AG04450 (cell line): ENCODE measurements at regions of chr3 and their contacts with region 1.

Region 1: GRCh38 chr3:159988617-159989271 is at the start of gene IL12A:
- DNase-seq: no peak
- H3K4me3 ChIP-seq: peak within 1 kb of the TSS; percentile 70
- H3K27ac ChIP-seq: no peak within 1 kb of the TSS
- H3K27me3 ChIP-seq: no peaks in the 10 kb centered on the region
- CTCF ChIP-seq: peak; percentile 92
- polyA plus RNA-seq, gene IL12A: 2.3 and 3.6 TPM in 2 replicates

Region 2: GRCh38 chr3:159884661-159885402 is 103.9 kb before region 1 on chr3:
- CTCF ChIA-PET with region 1: interaction called, 108 read pairs
- POLR2A ChIA-PET with region 1: no interaction called
- DNase-seq: no peak
- H3K4me3 ChIP-seq: no peak overlapping the region
- H3K27ac ChIP-seq: no peak overlapping the region
- H3K27me3 ChIP-seq: no peaks in the 10 kb centered on the region
- CTCF ChIP-seq: peak; percentile 58

Region 3: DNA sequence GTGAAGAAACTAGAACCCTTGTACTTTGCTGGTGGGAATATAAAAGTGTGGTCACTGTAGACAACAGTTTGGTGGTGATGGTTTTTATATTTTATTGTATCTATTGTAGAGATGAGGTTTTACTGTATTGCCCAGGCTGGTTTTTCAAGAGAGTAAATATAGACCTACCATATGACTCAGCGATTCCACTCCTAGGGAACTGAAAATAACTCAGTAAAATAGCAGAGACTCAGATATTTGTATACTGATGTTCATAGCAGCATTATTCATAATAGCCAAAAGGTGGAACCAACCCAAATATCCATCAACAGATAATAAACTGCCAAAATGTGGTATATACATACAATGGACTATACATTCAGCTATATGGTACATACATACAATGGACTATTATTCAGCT is 68.9 kb before region 1 on chr3:
- CTCF ChIA-PET with region 1: interaction called, 12 read pairs
- POLR2A ChIA-PET with region 1: no interaction called
- DNase-seq: no peak
- H3K4me3 ChIP-seq: no peak overlapping the region
- H3K27ac ChIP-seq: no peak overlapping the region
- H3K27me3 ChIP-seq: no peaks in the 10 kb centered on the region
- CTCF ChIP-seq: no peak

Region 4: GRCh38 chr3:159938712-159939111 is 50.0 kb before region 1 on chr3:
- CTCF ChIA-PET with region 1: interaction called, 15 read pairs
- POLR2A ChIA-PET with region 1: no interaction called
- DNase-seq: no peak
- H3K4me3 ChIP-seq: no peak overlapping the region
- H3K27ac ChIP-seq: no peak overlapping the region
- H3K27me3 ChIP-seq: no peaks in the 10 kb centered on the region
- CTCF ChIP-seq: no peak

Region 5: DNA sequence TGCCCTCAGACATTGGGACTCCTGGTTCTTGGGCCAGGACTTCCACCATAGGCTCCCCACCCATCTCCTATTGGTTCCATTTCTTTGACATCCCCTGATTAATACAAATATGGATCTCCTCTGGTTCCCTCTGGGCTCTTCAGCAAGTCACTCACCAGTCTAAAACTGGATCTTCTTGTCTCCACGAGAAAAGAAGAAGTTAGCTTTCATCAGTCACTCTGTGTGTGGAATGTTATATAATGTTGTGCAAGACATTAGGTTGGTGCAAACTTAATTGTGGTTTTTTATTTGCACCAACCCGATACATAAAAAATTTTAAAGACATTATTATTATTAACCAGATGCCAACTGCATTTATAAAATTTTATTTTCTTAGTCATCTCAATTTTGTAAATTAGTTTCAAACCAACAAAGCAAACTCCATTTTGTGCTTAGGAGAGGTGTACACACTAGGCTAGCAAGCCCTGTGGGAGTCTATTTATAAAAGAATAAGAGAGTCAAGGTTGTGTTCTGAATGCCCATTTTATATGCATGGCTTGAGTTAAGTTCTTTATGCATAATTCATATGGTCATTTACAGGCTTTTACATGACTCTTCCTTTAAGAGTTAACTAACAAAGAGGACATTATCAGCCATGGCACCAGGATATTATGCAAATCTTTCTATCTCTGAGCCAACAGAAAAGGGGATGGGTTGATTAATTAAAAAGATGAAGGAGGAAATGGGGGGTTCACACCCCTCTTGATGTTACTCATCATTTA is 35.2 kb before region 1 on chr3:
- CTCF ChIA-PET with region 1: interaction called, 16 read pairs
- POLR2A ChIA-PET with region 1: no interaction called
- DNase-seq: no peak
- H3K4me3 ChIP-seq: no peak overlapping the region
- H3K27ac ChIP-seq: no peak overlapping the region
- H3K27me3 ChIP-seq: no peaks in the 10 kb centered on the region
- CTCF ChIP-seq: no peak

Region 6: DNA sequence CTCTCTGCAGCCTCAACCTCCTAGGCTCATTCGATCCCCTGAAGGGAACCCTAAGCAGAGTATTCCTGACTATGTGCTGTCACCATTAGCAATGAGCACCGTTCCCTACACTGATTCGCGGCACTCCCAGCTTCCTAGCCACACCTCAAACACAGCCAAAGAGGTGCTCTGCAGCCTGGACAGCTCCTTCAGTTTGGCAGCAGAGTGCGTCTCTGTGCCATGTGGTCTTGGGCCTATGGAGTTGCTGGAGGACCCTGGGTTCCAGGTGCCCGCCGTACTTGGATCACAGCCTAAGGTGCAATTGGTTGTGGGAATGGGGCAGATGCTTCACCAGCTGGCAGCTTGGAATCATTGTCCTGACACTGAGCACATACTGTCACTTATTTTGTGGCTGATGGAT is 17.4 kb before region 1 on chr3:
- CTCF ChIA-PET with region 1: interaction called, 91 read pairs
- POLR2A ChIA-PET with region 1: no interaction called
- DNase-seq: no peak
- H3K4me3 ChIP-seq: no peak overlapping the region
- H3K27ac ChIP-seq: no peak overlapping the region
- H3K27me3 ChIP-seq: no peaks in the 10 kb centered on the region
- CTCF ChIP-seq: no peak

Region 7: DNA sequence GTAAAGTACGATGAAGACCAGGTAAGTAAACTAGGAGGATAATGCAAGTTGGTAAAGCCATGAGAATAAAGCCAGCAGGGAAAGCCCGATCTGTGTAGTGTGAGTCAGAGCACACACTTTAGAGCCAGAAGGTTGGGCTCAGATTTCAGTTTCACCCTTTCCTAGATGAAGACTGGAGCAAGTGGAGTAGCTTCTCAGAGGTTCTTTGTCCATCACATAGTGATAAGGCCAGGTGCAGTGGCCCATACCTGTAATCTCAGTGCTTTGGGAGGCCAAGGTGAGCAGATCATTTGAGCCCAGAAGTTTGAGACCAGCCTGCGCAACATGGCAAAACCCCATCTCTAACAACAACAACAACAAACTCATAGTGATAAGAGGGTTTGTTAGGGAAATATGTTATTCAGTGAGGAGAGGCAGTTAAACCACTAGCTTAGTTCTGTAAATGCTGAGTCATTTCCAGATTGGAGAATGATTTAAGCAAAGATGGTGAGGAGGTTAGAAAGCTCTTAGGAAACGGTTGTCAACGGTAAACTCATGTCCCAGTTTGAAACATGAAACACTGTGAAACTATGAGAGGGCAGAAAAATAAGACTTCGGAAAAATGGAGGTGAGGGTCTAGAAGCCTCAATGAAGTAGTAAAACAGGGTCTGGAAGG is 38.9 kb after region 1 on chr3:
- CTCF ChIA-PET with region 1: interaction called, 10 read pairs
- POLR2A ChIA-PET with region 1: no interaction called
- DNase-seq: peak; percentile 62
- H3K4me3 ChIP-seq: no peak overlapping the region
- H3K27ac ChIP-seq: peak overlapping the region; percentile 97
- H3K27me3 ChIP-seq: no peaks in the 10 kb centered on the region
- CTCF ChIP-seq: no peak

Region 8: DNA sequence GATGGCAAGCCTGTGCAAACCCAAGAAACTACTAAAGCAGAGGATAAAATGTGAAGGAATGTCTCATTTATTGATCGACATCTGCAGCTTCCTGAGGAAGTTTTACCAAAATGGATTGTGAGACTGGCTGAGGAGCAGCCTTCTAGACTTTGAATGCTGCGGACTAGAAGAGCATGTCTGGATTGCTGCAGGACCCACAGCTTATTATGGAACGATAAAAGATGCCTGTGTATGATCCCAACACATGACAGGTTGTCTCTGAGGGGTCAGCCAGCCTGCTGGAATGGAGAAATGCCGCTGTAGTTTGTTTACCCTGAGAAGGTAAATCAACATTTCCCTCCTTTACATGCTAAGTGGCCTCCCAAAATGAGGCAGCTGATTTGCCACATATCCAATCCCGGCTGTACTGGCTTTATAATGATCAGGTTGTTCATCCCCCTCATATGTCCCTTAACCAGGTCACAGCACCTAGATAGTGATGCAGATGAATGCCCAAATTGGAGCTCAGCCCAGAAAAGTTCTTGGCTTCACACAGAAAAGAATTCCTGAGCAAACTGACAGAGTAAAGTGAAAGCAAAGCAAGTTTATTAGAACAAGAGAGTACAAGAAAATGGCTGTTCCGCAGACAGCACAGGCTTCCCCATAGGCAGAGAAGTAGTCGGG is 63.8 kb after region 1 on chr3:
- CTCF ChIA-PET with region 1: no interaction called
- POLR2A ChIA-PET with region 1: no interaction called
- DNase-seq: no peak
- H3K4me3 ChIP-seq: 0 out of 2 replicates have a peak overlapping the region, but pooled peaks have one; percentile 17
- H3K27ac ChIP-seq: no peak overlapping the region
- H3K27me3 ChIP-seq: no peaks in the 10 kb centered on the region
- CTCF ChIP-seq: no peak

Region 9: GRCh38 chr3:160260587-160261270 is 272.0 kb after region 1 on chr3:
- CTCF ChIA-PET with region 1: no interaction called
- POLR2A ChIA-PET with region 1: no interaction called
- DNase-seq: no peak
- H3K4me3 ChIP-seq: no peak overlapping the region
- H3K27ac ChIP-seq: no peak overlapping the region
- H3K27me3 ChIP-seq: no peaks in the 10 kb centered on the region
- CTCF ChIP-seq: no peak